Activated CD4-positive, alpha-beta memory T cell treated with anti-CD3 and anti-CD28 coated beads for 36 hours (primary cell): ENCODE measurements at regions of chr15 and their contacts with region 1.

Region 1: DNA sequence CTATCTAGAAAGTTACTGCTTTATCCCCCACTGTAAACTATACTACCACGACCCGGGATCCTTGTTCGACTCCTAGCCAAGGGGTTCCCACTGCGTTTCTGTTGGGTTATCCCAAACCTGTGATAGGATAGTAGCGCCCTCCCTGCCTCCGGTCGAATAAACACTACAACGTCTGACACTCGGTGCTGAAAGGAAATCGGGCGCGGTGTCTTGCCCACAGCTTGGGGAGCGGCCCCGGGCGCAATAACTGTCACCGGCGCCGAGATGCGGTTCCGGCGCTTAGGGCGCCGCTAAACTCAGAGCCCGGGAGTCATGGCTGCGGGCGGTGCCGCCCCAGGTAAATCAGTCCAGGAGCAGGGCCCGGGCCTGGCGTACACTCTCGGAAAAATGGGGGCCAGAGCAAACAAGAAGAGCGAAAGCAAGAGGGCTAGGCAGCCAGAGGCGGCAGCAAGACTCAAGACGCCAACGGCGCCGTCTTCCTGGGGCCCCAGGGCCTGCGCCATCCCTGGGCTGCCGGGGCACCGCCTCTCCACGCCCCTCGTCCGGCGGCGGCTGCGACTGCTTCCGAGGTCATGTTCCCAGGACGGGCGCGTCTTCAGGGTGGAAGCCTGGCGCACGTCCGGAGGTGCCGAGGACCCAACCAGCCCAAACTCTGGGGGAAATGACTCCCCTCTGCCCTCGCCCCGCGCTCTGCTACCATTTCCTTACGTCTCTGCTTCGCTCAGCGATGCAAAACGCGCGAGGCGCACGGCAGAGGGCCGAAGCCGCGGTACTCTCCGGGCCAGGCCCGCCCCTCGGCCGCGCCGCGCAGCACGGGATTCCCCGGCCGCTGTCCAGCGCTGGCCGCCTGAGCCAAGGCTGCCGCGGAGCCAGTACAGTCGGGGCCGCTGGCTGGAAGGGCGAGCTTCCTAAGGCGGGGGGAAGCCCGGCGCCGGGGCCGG is at the start of gene DUT:
- DNase-seq: peak; percentile 87
- H3K4me3 Mint-ChIP-seq: peak within 1 kb of the TSS; percentile 99
- H3K27ac Mint-ChIP-seq: peak within 1 kb of the TSS; percentile 99
- H3K4me1 Mint-ChIP-seq: peaks cover 37% of the 10 kb centered on the region
- H3K27me3 Mint-ChIP-seq: no peaks in the 10 kb centered on the region
- total RNA-seq, gene DUT: 518 to 542 TPM

Region 2: DNA sequence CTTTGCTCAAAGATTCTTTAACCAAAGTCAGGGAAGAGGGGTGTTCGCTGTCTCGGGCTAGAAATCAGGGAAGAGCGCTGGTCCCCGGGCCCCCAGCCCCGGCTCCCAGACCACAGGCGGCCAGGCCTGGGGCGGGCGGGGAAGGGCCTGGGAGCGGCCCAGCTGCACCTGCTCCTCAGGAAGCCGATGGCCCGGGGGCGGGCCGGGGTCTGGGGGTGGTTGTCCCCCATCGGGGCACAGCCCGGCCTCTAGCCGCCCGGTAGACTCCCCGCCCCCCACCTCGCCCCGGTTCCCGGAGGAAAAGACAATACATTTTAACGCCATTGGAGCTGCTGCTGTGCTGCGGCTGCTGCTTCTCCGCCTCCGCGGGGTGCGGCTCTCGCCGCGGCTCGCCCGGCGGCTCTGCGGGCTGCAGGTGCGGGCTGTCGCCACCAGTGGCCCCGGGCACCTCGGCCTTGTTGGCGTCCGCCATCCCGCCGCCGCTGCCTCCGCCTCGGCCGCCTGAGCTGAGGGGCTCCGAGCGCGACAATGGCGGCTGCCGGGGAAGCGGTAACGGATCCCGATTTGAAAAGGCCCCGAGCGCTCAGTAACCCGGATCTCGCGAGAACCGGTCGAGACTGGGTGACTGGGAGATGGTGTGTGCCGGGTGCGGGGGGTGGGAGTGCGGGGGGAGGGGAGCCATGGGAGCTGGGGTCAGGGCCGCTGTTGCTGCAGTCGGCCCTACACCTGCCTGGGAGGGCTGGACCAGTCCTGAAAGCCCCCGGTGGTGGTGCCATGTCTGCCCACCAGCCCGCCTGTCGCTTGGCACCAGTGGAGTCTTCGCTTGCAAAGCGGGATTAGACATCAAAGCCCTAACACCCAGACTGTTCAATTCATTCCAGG is 153.1 kb before region 1 on chr15 and contains the start of gene MYEF2:
- CTCF ChIA-PET with region 1: no interaction called
- POLR2A ChIA-PET with region 1: interaction called, 3 read pairs
- intact Hi-C with region 1: loop called (anchors 2 kb)
- DNase-seq: peak; percentile 82
- H3K4me3 Mint-ChIP-seq: peak within 1 kb of the TSS; percentile 84
- H3K27ac Mint-ChIP-seq: peak within 1 kb of the TSS; percentile 79
- H3K4me1 Mint-ChIP-seq: peaks cover 22% of the 10 kb centered on the region
- H3K27me3 Mint-ChIP-seq: peaks cover 6% of the 10 kb centered on the region
- total RNA-seq, gene MYEF2: 21.9 to 24.7 TPM

Region 3: GRCh38 chr15:48292458-48292857 is 38.7 kb before region 1 on chr15:
- CTCF ChIA-PET with region 1: no interaction called
- POLR2A ChIA-PET with region 1: no interaction called
- intact Hi-C with region 1: loop called (anchors 2 kb)
- DNase-seq: no peak
- H3K4me3 Mint-ChIP-seq: no peak overlapping the region
- H3K27ac Mint-ChIP-seq: no peak overlapping the region
- H3K4me1 Mint-ChIP-seq: peaks cover 2% of the 10 kb centered on the region
- H3K27me3 Mint-ChIP-seq: no peaks in the 10 kb centered on the region

Region 4: DNA sequence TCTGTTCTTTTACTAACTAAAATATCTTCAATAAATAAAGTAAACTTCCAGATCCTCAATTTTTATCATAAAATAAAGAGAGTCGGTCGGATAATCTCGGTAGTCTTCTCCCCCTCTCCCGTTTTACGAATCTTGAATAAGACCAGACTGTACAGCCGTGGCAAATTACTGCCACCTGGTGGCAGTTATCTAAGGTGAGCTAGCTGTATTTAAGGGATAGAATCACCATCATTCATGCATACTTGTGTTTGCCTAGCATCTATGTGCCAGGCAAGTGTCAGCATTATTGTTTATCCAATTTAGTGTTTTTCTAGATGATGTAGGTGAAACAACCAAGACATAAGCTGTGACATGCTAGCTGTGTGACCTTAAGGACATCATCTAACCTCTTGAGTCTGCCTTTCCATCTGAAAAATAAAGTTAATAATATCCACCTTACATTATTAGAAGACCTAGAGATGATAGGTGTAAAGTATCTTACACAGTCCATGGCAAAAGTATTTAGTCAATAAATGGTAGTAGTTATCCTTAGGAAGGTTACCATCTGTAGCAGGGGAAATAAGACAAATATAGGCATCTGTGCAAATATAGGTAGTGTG is 21.4 kb after region 1 on chr15:
- CTCF ChIA-PET with region 1: interaction called, 35 read pairs
- POLR2A ChIA-PET with region 1: no interaction called
- intact Hi-C with region 1: no loop called
- DNase-seq: peak; percentile 61
- H3K4me3 Mint-ChIP-seq: no peak overlapping the region
- H3K27ac Mint-ChIP-seq: no peak overlapping the region
- H3K4me1 Mint-ChIP-seq: no peaks in the 10 kb centered on the region
- H3K27me3 Mint-ChIP-seq: peaks cover 2% of the 10 kb centered on the region

Region 5: DNA sequence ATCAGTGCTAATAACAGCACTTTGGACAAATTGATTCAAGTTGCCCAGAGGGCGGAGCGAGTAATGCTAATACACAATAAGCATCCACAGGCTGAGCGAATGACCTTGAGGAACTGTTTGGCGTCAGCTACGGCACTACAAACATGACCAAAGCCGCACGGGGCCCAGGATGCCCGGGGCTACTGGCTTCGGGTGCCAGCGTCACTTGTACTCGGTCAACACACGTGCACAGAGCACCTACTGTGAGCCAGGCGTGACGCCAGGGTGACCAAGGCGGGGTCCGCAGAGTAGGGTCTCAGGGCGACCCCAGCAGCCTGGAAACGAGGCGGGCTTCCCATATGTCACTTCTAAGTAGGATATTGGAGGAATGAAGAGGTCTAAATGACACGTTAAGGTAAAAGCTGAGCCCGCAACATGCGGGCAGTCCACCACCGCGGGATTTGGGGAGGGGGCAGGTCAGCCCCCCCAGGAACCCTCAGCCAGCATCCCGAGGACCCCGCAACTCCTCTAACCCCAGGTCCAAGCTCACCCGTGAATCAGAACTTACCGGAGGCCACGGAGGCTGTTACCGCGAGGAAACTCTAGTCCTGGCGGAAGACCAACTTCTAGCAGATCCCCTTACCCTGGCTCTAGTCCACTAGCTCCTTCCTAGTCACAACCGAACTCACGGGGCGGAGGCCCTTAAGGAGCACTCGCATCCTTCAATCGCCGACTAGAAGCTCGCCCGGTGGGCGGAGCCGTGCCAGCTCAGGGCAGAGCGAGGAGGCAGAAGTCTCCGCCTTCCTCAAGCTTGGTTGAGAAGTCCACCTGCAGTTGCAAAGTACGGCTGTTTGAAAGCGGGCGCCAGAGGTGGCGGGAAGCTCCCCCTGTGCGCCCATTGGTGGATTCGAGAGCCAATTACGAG is 479.5 kb after region 1 on chr15 and contains the start of gene CEP152:
- CTCF ChIA-PET with region 1: no interaction called
- POLR2A ChIA-PET with region 1: interaction called, 3 read pairs
- intact Hi-C with region 1: loop called (anchors 2 kb)
- DNase-seq: peak; percentile 99
- H3K4me3 Mint-ChIP-seq: peak within 1 kb of the TSS; percentile 96
- H3K27ac Mint-ChIP-seq: peak within 1 kb of the TSS; percentile 95
- H3K4me1 Mint-ChIP-seq: peaks cover 36% of the 10 kb centered on the region
- H3K27me3 Mint-ChIP-seq: peaks cover 1% of the 10 kb centered on the region
- total RNA-seq, gene CEP152: 36.1 to 39.4 TPM

Region 6: DNA sequence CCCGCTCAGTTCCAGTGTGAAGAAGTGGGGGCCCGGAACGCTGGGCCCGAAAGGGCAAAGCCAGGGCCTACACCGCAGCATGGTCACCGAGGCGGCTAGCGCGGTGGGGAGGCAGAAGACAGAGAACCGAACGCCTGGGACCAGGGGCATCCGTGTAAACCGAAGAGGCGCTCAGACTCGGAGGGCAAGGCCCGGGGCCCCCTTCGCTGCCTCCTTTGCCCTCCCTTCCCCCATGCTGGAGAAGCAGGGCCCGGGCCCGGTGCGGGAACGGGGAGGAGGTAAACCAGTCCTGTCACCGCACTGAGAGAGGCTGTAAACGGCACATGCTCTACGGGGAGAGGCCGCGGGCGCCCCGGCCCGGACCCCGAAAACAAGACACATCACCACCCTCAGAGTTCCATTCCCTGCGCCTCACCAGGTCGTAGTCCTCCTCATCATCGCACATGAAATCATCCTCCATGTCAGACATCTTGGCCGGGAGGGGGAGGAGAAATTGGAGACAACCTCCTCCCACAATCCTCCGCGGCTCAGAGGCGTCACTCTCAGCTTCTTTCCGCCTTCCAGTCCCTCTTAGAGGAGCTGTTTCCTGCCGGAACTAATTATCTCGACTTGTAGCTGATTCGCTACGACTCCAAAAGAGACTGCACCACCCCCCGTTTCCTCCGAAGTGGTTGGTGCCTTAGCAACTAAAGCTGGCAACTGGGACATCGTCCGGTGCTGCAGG is 824.1 kb after region 1 on chr15 and contains the start of gene COPS2:
- CTCF ChIA-PET with region 1: no interaction called
- POLR2A ChIA-PET with region 1: no interaction called
- intact Hi-C with region 1: loop called (anchors 1 kb)
- DNase-seq: peak; percentile 97
- H3K4me3 Mint-ChIP-seq: peak within 1 kb of the TSS; percentile 99
- H3K27ac Mint-ChIP-seq: peak within 1 kb of the TSS; percentile 97
- H3K4me1 Mint-ChIP-seq: peaks cover 50% of the 10 kb centered on the region
- H3K27me3 Mint-ChIP-seq: no peaks in the 10 kb centered on the region
- total RNA-seq, gene COPS2: 79.8 to 80.0 TPM